Activated CD4-positive, alpha-beta T cell treated with anti-CD3 and anti-CD28 coated beads for 36 hours (primary cell): ENCODE measurements at regions of chr1 and their contacts with region 1.

Region 1: GRCh38 chr1:203861379-203862184 is at the start of gene SNRPE:
- DNase-seq: peak; percentile 98
- ATAC-seq: peak; percentile 98
- H3K4me3 Mint-ChIP-seq: peak within 1 kb of the TSS; percentile 100
- H3K27ac Mint-ChIP-seq: peak within 1 kb of the TSS; percentile 99
- H3K4me1 Mint-ChIP-seq: peaks cover 8% of the 10 kb centered on the region
- H3K27me3 Mint-ChIP-seq: no peaks in the 10 kb centered on the region
- total RNA-seq, gene SNRPE: 211 to 416 TPM

Region 2: DNA sequence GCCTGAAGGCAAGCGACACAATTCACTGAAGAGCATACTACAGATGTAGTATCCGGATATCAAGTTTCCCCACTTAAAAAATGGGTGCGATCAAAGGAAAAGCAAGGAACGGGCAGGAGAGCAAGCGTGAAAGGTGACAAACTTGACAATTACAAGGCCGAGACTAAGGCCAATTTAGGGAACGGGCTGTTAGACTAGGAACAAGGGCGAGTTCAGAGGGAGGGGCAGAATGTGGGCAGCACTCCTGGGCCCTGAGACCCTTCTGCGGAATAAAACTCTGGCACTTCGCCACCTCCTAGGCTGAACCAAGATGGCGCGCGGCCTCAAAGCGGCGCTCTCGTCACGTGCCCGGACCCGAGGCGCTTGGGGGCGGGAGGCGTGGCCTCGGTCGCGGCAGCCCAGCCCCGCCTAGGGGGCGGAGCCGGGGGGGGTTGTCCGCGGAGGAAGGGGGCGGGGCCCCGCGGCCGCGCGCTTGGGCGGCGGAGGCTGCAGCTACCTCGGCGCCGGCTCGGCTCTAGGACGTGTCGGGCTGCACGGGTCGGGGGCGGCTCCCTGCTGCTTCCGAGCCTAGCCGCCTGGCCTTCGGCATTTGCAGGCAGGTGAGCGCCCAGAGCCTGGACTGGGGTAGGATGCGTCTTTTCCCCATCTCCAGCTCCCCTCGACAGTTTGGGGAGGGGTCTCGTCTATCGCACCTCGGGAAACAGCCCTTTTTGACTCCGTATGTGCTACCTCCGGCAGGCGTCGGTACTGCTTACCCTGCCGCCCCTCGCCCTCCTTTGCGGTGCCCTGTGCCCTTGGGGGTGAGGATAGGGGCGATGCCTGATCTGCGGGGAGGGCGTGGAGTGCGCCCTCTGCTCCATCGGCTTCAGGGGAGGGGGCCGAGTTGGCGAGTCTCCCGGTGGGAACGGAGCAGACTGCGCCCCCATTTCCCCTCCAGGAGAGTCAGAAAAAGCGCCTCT is 835.3 kb before region 1 on chr1 and contains the start of gene PPFIA4:
- CTCF ChIA-PET with region 1: no interaction called
- POLR2A ChIA-PET with region 1: no interaction called
- intact Hi-C with region 1: loop called in 1 of 2 experiments (anchors 1 kb)
- DNase-seq: peak; percentile 95
- ATAC-seq: peak; percentile 95
- H3K4me3 Mint-ChIP-seq: peak within 1 kb of the TSS; percentile 82
- H3K27ac Mint-ChIP-seq: peak within 1 kb of the TSS; percentile 84
- H3K4me1 Mint-ChIP-seq: peaks cover 19% of the 10 kb centered on the region
- H3K27me3 Mint-ChIP-seq: peaks cover 4% of the 10 kb centered on the region
- total RNA-seq, gene PPFIA4: 51.2 to 56.4 TPM

Region 3: DNA sequence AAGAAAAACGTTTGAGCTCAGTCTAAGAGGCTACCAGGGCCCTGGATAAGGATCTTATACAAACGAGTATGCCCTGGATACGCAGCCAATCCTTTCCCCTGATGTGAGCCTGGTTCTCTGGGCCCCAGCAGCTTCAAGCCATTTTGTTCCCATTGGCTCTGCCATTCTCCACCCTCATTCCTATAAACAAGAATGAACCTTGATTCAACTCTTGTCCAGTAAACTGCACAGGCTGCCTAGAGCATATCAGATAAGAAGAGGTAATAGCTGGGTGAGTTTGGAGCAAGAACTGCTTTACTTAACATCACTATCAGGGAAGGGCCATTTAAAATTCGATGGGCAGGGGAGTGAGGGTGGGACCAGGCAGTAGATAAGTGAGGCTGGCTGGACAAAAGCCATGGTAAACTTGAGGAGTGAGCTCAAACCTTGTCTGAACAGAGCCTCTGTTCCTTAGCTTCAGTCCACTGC is 544.9 kb before region 1 on chr1:
- CTCF ChIA-PET with region 1: no interaction called
- POLR2A ChIA-PET with region 1: no interaction called
- intact Hi-C with region 1: no loop called
- DNase-seq: no peak
- ATAC-seq: no peak
- H3K4me3 Mint-ChIP-seq: no peak overlapping the region
- H3K27ac Mint-ChIP-seq: no peak overlapping the region
- H3K4me1 Mint-ChIP-seq: peaks cover 36% of the 10 kb centered on the region
- H3K27me3 Mint-ChIP-seq: no peaks in the 10 kb centered on the region

Region 4: GRCh38 chr1:203795441-203796235 is 65.9 kb before region 1 on chr1 and contains the starts of genes ZBED6 and ZC3H11A:
- CTCF ChIA-PET with region 1: no interaction called
- POLR2A ChIA-PET with region 1: no interaction called
- intact Hi-C with region 1: loop called (anchors 1 kb)
- DNase-seq: peak; percentile 99
- ATAC-seq: peak; percentile 99
- H3K4me3 Mint-ChIP-seq: peak within 1 kb of the TSS; percentile 86
- H3K27ac Mint-ChIP-seq: peak within 1 kb of the TSS; percentile 96
- H3K4me1 Mint-ChIP-seq: peaks cover 45% of the 10 kb centered on the region
- H3K27me3 Mint-ChIP-seq: no peaks in the 10 kb centered on the region
- total RNA-seq, gene ZBED6: 16.4 to 19.3 TPM
- total RNA-seq, gene ZC3H11A: 92.8 to 112 TPM

Region 5: GRCh38 chr1:204151552-204152309 is 290.1 kb after region 1 on chr1 and contains the start of gene ETNK2:
- CTCF ChIA-PET with region 1: no interaction called
- POLR2A ChIA-PET with region 1: no interaction called
- intact Hi-C with region 1: loop called in 1 of 2 experiments (anchors 1 kb)
- DNase-seq: peak; percentile 62
- ATAC-seq: peak; percentile 72
- H3K4me3 Mint-ChIP-seq: peak within 1 kb of the TSS; percentile 63
- H3K27ac Mint-ChIP-seq: no peak within 1 kb of the TSS
- H3K4me1 Mint-ChIP-seq: peaks cover 4% of the 10 kb centered on the region
- H3K27me3 Mint-ChIP-seq: no peaks in the 10 kb centered on the region
- total RNA-seq, gene ETNK2: 0.77 to 0.82 TPM

Region 6: GRCh38 chr1:204363335-204364124 is 501.9 kb after region 1 on chr1:
- CTCF ChIA-PET with region 1: no interaction called
- POLR2A ChIA-PET with region 1: interaction called, 4 read pairs
- intact Hi-C with region 1: loop called (anchors 1 to 2 kb)
- DNase-seq: peak; percentile 87
- ATAC-seq: peak; percentile 81
- H3K4me3 Mint-ChIP-seq: peak overlapping the region; percentile 60
- H3K27ac Mint-ChIP-seq: peak overlapping the region; percentile 85
- H3K4me1 Mint-ChIP-seq: peaks cover 33% of the 10 kb centered on the region
- H3K27me3 Mint-ChIP-seq: peaks cover 2% of the 10 kb centered on the region

Region 7: DNA sequence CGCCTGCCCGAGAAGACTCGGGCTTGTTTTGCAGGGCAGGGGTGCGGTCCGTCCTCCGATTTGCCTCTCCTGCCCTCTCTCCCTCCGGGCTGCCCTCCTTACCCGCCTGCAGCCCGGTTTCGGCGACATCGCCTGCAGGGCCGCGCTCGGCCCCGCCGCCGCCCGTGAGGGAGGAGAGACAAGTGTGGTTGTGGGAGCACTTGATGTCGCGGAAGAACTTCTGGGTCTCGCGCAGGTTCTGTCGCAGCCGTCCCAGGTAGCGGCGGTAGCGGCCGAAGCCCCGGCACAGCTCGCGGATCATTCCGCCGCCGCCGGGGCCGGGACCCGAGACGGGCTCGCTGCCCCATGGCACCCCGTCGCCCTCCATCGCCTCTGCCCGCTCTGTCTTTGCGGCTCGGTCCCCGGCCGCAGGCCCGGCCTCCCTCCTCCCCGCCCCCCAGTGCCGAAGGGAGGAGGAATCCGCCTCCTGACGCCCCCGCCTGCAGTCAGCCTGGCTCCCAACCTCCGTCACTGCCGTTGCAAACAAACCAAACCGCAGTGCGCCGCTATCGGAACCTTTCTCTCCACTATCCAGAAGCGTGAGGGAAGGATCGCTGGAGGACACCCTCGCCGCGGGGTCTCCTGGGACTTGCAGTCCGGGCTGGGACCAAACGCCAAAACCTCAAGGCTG is 1349.7 kb after region 1 on chr1 and contains the start of gene DSTYK:
- CTCF ChIA-PET with region 1: no interaction called
- POLR2A ChIA-PET with region 1: no interaction called
- intact Hi-C with region 1: loop called in 1 of 2 experiments (anchors 2 kb)
- DNase-seq: peak; percentile 97
- ATAC-seq: peak; percentile 90
- H3K4me3 Mint-ChIP-seq: peak within 1 kb of the TSS; percentile 97
- H3K27ac Mint-ChIP-seq: peak within 1 kb of the TSS; percentile 95
- H3K4me1 Mint-ChIP-seq: peaks cover 54% of the 10 kb centered on the region
- H3K27me3 Mint-ChIP-seq: no peaks in the 10 kb centered on the region
- total RNA-seq, gene DSTYK: 9.4 to 12.3 TPM